Activated naive CD4-positive, alpha-beta T cell treated with anti-CD3 and anti-CD28 coated beads, Interleukin-2, amount 10 ng/mL, durations not matched to agents 7 days and 5 days (primary cell): ENCODE measurements at regions of chr11 and their contacts with region 1.

Region 1: DNA sequence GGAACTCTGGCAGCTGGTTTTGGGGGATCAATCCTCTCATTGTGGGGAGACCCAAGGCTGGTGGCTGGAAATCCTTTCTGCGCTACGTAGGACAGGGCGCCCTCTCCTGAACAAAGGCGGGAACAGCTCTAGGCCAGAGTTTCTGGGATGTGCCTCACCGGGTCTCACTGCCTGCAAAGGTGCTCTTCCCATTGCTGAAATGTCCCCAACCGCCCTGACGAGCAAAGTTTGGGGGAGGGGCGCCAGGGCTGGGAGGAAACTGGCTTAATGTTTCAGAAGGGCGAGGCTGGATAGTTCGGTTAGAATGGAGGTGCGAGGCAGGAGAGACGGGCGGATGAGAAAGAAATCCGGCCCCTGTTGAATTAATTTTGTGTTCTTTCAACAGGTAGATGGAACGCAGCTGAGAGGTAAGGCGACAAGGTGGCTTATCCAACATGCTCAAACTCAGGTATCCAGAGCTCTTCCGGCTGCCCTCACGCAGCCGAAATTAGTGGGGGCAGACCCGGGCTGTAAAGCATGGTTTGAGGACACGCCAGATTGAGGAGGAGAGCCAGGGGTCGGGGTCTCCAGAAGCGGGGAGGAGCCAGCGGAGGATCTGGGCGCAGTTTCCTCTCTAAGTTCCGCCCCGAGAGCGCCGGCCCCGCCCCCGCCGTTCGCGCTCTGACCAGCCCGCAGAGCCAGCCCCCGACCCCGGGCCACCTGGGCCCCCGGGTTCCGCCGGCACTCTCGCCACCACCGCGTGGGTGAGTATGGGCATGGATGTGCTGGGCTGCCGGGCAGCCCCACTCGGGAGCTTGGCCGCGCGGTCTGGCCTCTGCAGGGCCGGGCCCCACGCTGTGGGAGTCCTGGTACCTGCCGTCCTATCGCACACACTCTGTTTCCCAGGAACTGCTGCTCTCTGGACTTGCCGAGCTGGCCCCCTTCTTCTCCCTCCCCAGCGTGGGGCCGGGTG is at the start of gene PGAP2:
- DNase-seq: peak; percentile 81
- H3K4me3 Mint-ChIP-seq: peak within 1 kb of the TSS; percentile 93
- H3K27ac Mint-ChIP-seq: peak within 1 kb of the TSS; percentile 91
- H3K4me1 Mint-ChIP-seq: peaks cover 26% of the 10 kb centered on the region
- H3K27me3 Mint-ChIP-seq: no peaks in the 10 kb centered on the region

Region 2: DNA sequence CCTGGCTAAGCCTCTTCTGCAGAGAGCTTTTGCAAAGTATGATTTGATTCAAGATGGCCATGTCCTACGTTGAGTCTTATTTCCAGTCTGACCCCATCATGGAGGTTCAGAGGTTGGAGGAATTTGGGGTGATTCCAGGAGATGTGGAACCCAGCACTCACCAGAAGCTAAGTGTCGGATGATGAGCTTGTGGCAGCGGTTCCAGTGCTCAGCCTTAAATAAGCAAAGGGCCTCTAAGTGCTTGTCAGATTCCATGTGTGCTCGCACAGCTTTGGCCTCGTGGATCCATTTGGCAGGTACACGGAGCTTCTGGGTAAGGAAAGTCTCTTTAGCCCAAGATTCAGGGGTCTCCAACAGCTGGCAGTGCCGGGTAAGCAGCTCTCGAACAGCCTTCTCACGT is 125.1 kb before region 1 on chr11:
- CTCF ChIA-PET with region 1: interaction called, 26 read pairs
- DNase-seq: no peak
- H3K4me3 Mint-ChIP-seq: no peak overlapping the region
- H3K27ac Mint-ChIP-seq: no peak overlapping the region
- H3K4me1 Mint-ChIP-seq: peaks cover 18% of the 10 kb centered on the region
- H3K27me3 Mint-ChIP-seq: no peaks in the 10 kb centered on the region

Region 3: GRCh38 chr11:3775736-3776406 is 32.3 kb before region 1 on chr11:
- CTCF ChIA-PET with region 1: interaction called, 10 read pairs
- DNase-seq: no peak
- H3K4me3 Mint-ChIP-seq: no peak overlapping the region
- H3K27ac Mint-ChIP-seq: no peak overlapping the region
- H3K4me1 Mint-ChIP-seq: peaks cover 2% of the 10 kb centered on the region
- H3K27me3 Mint-ChIP-seq: no peaks in the 10 kb centered on the region

Region 4: DNA sequence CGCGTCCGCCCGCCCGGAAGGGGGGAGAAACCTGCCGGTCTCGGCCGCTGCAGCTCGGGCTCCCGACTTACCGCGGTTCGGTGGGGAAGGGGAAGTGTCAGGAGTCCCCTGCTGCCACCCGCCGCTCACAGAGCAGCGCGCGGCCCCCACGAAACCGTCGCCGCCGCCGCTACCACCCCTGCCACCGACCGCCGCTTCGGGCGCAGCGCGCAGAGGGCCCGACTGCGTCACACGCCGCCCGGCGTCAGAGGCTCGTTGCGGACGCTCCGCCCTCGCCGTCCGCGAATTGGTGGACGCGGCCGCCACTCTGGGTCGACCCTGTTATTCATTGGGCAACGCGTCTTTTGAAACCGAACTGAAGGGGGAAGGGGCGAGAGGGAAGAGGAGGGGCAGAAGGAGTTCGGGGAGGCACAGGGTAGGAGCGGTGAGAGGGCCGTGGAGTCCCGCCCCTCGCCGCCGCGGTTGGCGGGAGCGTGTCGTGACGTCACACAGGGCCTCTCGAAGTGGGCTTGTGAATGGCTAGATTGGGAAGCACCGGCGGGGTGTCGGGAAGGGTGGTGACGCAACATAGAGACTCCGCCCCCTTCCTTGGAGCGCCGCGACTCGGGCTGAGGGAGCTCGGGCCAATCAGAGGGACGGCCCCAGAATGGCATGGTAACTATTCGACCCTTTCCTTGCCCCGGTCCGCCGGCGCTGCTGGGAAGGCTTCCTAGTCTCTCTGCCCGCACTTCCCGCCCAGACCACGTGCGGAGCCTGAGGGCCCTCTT is 10.7 kb before region 1 on chr11 and contains the start of gene NUP98:
- CTCF ChIA-PET with region 1: interaction called, 21 read pairs
- DNase-seq: peak; percentile 100
- H3K4me3 Mint-ChIP-seq: peak within 1 kb of the TSS; percentile 89
- H3K27ac Mint-ChIP-seq: peak within 1 kb of the TSS; percentile 96
- H3K4me1 Mint-ChIP-seq: peaks cover 48% of the 10 kb centered on the region
- H3K27me3 Mint-ChIP-seq: peaks cover 4% of the 10 kb centered on the region

Region 5: DNA sequence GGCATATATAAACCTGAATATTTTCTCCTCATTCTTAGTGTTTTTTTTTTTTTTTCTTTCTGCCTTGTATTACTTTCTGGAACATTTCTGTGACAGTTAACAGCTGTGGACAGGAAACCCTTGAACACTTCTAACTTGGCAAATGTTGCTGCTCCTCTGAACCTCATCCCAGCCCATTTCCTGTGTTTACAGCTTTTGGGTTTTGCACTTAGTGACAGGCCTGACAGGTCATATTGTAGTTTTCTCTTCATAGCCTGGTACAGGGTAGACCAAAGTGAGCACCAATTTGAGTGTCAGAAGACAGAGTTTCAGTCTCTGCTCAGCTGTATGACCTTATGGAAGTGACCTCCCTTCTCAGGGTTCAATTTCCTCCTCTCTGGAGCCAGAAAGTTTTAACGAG is 138.9 kb after region 1 on chr11:
- CTCF ChIA-PET with region 1: no interaction called
- DNase-seq: peak; percentile 72
- H3K4me3 Mint-ChIP-seq: peak overlapping the region; percentile 72
- H3K27ac Mint-ChIP-seq: peak overlapping the region; percentile 98
- H3K4me1 Mint-ChIP-seq: peaks cover 95% of the 10 kb centered on the region
- H3K27me3 Mint-ChIP-seq: no peaks in the 10 kb centered on the region

Region 6: GRCh38 chr11:3989276-3989920 is 181.2 kb after region 1 on chr11:
- CTCF ChIA-PET with region 1: no interaction called
- DNase-seq: no peak
- H3K4me3 Mint-ChIP-seq: peak overlapping the region; percentile 11
- H3K27ac Mint-ChIP-seq: peak overlapping the region; percentile 60
- H3K4me1 Mint-ChIP-seq: peaks cover 69% of the 10 kb centered on the region
- H3K27me3 Mint-ChIP-seq: no peaks in the 10 kb centered on the region